Motor neuron (in vitro differentiated cells): ENCODE measurements at regions of chr16 and their contacts with region 1.

Region 1: DNA sequence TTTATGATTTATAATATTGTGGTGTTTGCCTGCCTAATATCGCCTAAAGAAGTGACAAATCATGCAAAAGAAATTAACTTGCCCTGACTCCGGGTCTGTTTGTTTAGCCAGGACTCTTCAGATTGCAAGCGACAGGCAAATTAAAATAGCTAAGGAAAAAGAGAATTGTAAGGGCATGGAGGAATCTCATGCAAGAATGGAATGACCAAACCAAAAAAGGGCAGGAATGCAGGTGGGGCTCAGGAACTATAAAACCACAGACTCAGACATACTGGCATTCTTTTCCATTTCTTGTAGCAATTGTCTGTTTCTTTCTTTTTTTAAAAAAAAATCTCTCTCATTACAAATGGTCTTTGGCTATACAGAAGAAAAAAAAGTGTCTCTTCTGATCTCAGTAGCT is 188.1 kb upstream of the XYLT1 start:
- ATAC-seq: peak in 1 of 8 experiments; percentile 34
- H3K4me3 ChIP-seq: no peak overlapping the region
- H3K27ac ChIP-seq: no peak overlapping the region
- H3K4me1 ChIP-seq: peaks cover 0 to 26% of the 10 kb centered on the region in 2 donors

Region 2: DNA sequence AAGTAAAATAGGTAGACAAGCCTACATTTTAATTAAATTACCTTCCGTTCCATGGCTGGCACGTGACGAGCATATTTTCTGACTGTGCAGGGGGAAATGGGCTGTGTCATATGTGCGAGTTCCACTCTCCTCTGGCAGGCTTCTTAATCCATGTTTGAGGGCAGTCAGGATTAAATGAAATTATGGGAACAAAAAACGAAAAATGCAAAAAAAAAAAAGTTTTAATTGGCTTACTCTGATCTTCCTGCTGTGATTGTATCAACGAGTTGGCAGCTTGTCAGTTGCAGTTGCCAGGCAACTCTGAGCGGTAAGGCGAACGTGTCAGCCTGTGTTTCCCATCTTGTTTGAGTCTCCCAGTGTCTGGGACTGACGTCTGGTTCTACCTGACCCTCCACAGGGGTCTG is 114.8 kb after region 1 on chr16:
- in situ Hi-C with region 1: loop called in 1 of 9 experiments (anchors 25 kb)
- ATAC-seq: no peak
- H3K4me3 ChIP-seq: no peak overlapping the region
- H3K27ac ChIP-seq: no peak overlapping the region
- H3K4me1 ChIP-seq: peaks cover 6 to 12% of the 10 kb centered on the region in 2 donors